ENCODE measurements at regions of chr11 and their contacts with region 1.

Region 1: DNA sequence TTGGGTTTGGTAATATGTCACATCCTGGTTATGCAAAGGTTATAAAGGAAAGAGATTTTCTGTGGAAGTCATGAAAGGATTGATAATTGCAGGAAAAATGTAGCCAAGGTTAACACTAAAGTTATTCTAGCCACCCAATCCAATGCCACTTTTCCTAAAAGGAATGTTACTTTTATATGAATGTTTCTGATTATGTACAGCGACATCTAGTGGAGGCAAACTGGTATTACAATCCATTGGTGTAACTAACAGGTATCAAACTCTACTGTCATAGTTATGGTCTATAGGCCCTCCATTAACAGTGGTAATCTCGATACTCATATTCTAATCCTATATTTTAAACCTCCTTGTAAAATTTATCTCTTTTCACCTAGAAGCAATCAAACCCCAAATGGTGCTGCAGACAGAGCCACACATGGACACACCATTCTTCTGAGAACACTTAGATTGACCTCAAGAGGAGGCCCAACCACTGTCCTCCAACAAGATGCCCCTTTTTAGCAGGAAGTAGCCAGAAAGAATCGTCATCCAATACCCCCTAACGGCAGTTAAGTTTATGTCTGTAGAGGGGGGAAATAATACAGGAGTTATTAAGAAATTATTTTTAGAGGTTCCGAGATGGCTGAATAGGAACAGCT is 74.9 kb upstream of the RAG2 start:
- DNase-seq: peak; percentile 33
- H3K4me3 ChIP-seq: no peak overlapping the region
- H3K27ac ChIP-seq: no peak overlapping the region
- H3K4me1 ChIP-seq: no peaks in the 10 kb centered on the region
- H3K27me3 ChIP-seq: no peaks in the 10 kb centered on the region
- CTCF ChIP-seq: peak; percentile 84
- EP300 ChIP-seq: no peak
- RAD21 ChIP-seq: peak; percentile 62

Region 2: DNA sequence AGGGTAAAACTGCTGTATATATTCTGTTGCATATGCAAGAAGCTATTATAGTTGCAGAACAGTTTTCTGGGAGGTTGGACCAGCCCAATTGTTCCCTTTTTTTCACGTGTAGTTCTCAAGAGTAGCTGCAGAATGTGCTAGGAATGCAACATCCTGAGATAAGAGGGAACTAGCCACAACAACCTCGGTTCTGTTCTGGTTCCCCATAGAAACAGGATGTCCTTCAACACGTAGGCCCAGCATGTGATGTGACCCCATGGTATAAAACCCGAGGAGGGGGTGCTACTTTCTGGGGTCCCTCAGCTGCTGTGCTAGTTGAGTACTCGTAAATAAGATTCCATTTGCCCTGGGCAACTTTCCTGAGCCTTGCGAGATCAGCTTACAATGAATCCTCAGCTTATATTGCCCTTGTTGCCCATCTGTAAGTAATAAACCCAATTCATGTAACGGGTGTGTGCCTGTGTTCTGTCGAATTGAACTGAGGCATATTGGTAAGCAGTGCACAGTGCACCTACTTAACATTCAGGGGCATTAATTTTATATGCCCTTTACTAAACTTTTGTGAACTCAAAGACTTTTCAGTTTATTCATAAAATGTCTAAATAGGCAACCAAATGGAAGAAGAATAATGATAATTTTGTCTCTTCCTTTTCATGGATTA is 139.9 kb before region 1 on chr11:
- CTCF ChIA-PET with region 1: no interaction called
- POLR2A ChIA-PET with region 1: no interaction called
- DNase-seq: peak; percentile 51
- H3K4me3 ChIP-seq: no peak overlapping the region; a peak in 1 of 4 replicates
- H3K27ac ChIP-seq: peak overlapping the region in 1 of 2 experiments; percentile 91; a peak in 2 of 4 replicates
- H3K4me1 ChIP-seq: peaks cover 0 to 13% of the 10 kb centered on the region in 2 experiments; a peak in 2 of 4 replicates
- H3K27me3 ChIP-seq: no peaks in the 10 kb centered on the region
- CTCF ChIP-seq: no peak
- EP300 ChIP-seq: peak in 1 of 2 experiments; percentile 62; a peak in 1 of 4 replicates
- RAD21 ChIP-seq: no peak

Region 3: GRCh38 chr11:36631774-36632173 is 41.2 kb before region 1 on chr11:
- CTCF ChIA-PET with region 1: interaction called, 10 read pairs
- POLR2A ChIA-PET with region 1: no interaction called
- DNase-seq: no peak
- H3K4me3 ChIP-seq: no peak overlapping the region
- H3K27ac ChIP-seq: peak overlapping the region in 1 of 2 experiments; percentile 99; a peak in 2 of 4 replicates
- H3K4me1 ChIP-seq: peaks cover 0 to 37% of the 10 kb centered on the region in 2 experiments; a peak in 2 of 4 replicates
- H3K27me3 ChIP-seq: no peaks in the 10 kb centered on the region
- CTCF ChIP-seq: no peak
- EP300 ChIP-seq: no peak
- RAD21 ChIP-seq: no peak